ENCODE measurements at regions of chr2 and their contacts with region 1.

Region 1: DNA sequence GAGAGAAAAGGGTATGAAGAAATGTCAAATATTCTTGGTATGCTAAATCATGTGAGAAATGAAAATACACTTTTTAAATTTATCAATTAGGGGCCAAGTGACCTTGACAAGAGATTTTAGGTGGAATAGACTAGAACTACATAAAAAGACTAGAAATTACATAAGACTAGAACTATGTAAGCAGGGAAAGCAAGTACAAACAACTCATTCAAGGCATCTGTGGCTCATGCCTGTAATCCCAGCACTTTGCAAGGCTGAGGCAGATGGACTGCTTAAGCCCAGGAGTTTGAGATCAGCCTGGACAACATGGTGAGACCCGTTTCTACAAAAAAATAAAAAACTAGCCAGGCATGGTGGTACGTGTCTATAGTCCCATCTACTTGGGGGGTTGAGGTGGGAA is 20.3 kb downstream of the SF3B1 start:
- DNase-seq: no peak
- H3K4me3 ChIP-seq: no peak overlapping the region
- H3K27ac ChIP-seq: no peak overlapping the region
- H3K4me1 ChIP-seq: no peaks in the 10 kb centered on the region
- H3K27me3 ChIP-seq: no peaks in the 10 kb centered on the region
- CTCF ChIP-seq: no peak

Region 2: DNA sequence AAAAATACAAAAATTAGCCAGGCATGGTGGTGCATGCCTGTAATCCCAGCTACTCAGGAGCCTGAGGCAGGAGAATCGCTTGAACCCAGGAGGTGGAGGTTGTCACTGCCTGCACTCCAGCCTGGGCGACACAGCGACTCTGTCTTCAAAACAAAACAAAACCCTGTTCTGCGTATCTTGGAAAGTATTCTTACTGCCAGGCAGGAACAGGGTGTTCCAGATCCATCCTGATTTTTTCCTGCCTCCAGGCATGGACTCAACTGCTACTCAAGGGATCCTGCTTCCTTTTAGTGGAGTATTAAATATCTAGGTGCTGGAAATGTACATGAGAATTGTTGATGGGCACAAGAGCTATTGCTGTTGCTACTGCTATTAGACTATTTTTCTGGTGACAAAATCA is 72.9 kb after region 1 on chr2:
- intact Hi-C with region 1: loop called (anchors 5 kb)
- DNase-seq: no peak
- H3K4me3 ChIP-seq: no peak overlapping the region
- H3K27ac ChIP-seq: no peak overlapping the region
- H3K4me1 ChIP-seq: no peaks in the 10 kb centered on the region
- H3K27me3 ChIP-seq: no peaks in the 10 kb centered on the region
- CTCF ChIP-seq: no peak